AG04449 (cell line): ENCODE measurements at regions of chr14 and their contacts with region 1.

Region 1: GRCh38 chr14:61561657-61562276 is 133.5 kb upstream of the HIF1A start:
- DNase-seq: peak; percentile 99
- H3K4me3 ChIP-seq: no peak overlapping the region; the same call in 1 of the 2 replicates
- CTCF ChIP-seq: no peak

Region 2: GRCh38 chr14:61547186-61548086 is 14.3 kb before region 1 on chr14:
- CTCF ChIA-PET with region 1: interaction called, 4 read pairs
- POLR2A ChIA-PET with region 1: interaction called, 43 read pairs
- DNase-seq: peak; percentile 83
- H3K4me3 ChIP-seq: no peak overlapping the region
- CTCF ChIP-seq: no peak

Region 3: GRCh38 chr14:61573748-61574513 is 12.2 kb after region 1 on chr14:
- CTCF ChIA-PET with region 1: interaction called, 3 read pairs
- POLR2A ChIA-PET with region 1: interaction called, 11 read pairs
- DNase-seq: no peak
- H3K4me3 ChIP-seq: no peak overlapping the region
- CTCF ChIP-seq: no peak

Region 4: GRCh38 chr14:61585598-61586543 is 24.1 kb after region 1 on chr14:
- CTCF ChIA-PET with region 1: interaction called, 6 read pairs
- POLR2A ChIA-PET with region 1: interaction called, 13 read pairs
- DNase-seq: no peak
- H3K4me3 ChIP-seq: no peak overlapping the region
- CTCF ChIP-seq: no peak

Region 5: DNA sequence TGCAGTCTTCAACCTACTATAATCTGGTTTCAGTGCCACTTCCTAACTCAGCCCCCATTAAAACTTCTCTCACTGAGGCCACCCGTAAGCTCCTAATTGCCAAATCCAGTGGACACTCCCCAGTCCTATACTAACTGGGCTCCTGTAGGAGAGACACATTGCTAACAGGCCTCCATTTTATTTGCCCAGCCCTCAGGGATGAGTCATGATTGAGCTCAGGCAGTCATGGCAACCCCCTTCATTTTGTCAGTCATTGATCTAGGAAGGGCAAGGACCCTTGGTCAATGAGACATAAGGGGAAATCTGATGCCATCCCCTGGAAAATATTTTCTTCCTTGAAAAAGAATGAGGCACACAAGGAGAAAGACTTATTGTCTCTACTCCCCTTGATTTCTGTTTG is 63.4 kb after region 1 on chr14:
- CTCF ChIA-PET with region 1: no interaction called
- POLR2A ChIA-PET with region 1: no interaction called
- DNase-seq: no peak
- H3K4me3 ChIP-seq: no peak overlapping the region
- CTCF ChIP-seq: no peak

Region 6: GRCh38 chr14:61694830-61695694 is 133.3 kb after region 1 on chr14 and contains the start of gene HIF1A:
- CTCF ChIA-PET with region 1: interaction called, 4 read pairs
- POLR2A ChIA-PET with region 1: interaction called, 30 read pairs
- DNase-seq: peak; percentile 95
- H3K4me3 ChIP-seq: peak within 1 kb of the TSS; percentile 87
- CTCF ChIP-seq: peak; percentile 45